ENCODE measurements at regions of chr22 and their contacts with region 1.

Region 1: DNA sequence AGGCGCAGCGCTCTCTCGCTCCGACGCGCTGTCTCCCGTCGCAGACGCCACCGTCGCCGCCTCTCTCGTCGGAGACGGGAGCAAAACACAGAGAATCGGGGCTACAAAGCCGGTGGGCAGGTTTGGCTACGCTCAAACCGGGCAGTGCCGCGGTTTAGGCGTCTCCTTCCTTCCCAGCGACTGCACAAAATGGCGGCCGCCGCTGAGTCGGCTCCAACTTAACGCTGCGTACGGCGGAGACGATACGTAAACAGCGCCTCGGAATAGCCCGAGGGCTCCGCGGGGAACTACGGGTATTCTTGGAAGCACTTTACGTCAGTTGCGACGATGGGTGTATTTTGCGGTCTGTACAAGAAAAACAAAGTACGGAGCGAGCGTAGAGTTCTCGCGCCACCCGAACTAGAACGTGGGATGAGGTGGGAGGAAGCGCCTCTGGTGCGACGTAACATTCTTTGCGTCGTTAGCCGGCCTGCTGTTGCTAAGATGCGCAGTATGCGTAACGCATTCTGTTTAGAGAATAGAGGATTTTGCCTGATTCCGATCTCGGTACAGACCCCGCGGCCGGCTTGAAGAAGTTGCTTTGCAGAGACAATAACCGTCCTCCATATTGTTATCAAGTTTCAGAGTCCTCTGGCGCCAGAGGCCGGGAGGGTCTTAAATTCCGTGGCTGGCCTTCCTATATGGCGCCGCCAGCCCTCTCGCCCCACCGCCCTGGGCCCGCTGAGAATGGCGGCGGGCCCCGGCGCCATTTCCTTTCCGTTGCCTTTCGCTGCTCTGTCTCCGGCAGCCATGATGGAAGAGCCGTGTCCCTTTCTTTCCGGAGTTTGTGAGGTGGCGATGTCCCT is at the start of gene DDX17:
- DNase-seq: peak; percentile 99
- H3K4me3 ChIP-seq: peak within 1 kb of the TSS; percentile 87
- H3K27ac ChIP-seq: peak within 1 kb of the TSS; percentile 99
- H3K4me1 ChIP-seq: peaks cover 14% of the 10 kb centered on the region
- H3K27me3 ChIP-seq: no peaks in the 10 kb centered on the region
- CTCF ChIP-seq: no peak
- total RNA-seq, gene DDX17: 343 and 350 TPM in 2 replicates

Region 2: GRCh38 chr22:38490915-38491314 is 15.4 kb before region 1 on chr22:
- CTCF ChIA-PET with region 1: no interaction called
- POLR2A ChIA-PET with region 1: interaction called, 12 read pairs
- intact Hi-C with region 1: no loop called
- DNase-seq: no peak
- H3K4me3 ChIP-seq: no peak overlapping the region
- H3K27ac ChIP-seq: peak overlapping the region; percentile 17
- H3K4me1 ChIP-seq: no peaks in the 10 kb centered on the region
- H3K27me3 ChIP-seq: no peaks in the 10 kb centered on the region
- CTCF ChIP-seq: no peak

Region 3: GRCh38 chr22:38705235-38706100 is 199.1 kb after region 1 on chr22 and contains the start of gene GTPBP1:
- CTCF ChIA-PET with region 1: no interaction called
- POLR2A ChIA-PET with region 1: no interaction called
- intact Hi-C with region 1: loop called (anchors 10 kb)
- DNase-seq: peak; percentile 100
- H3K4me3 ChIP-seq: peak within 1 kb of the TSS; percentile 94
- H3K27ac ChIP-seq: peak within 1 kb of the TSS; percentile 97
- H3K4me1 ChIP-seq: peaks cover 28% of the 10 kb centered on the region
- H3K27me3 ChIP-seq: no peaks in the 10 kb centered on the region
- CTCF ChIP-seq: no peak
- total RNA-seq, gene GTPBP1: 88.2 and 96.2 TPM in 2 replicates

Measured in A673 (cell line).